SK-N-SH (cell line): ENCODE measurements at regions of chr15 and their contacts with region 1.

Region 1: GRCh38 chr15:86915811-86916331 is 836.2 kb downstream of the AGBL1 start:
- DNase-seq: peak; percentile 65
- H3K4me3 ChIP-seq: no peak overlapping the region
- H3K27ac ChIP-seq: no peak overlapping the region
- H3K4me1 ChIP-seq: no peaks in the 10 kb centered on the region; a peak in 1 of 4 replicates
- H3K27me3 ChIP-seq: no peaks in the 10 kb centered on the region
- CTCF ChIP-seq: peak; percentile 62
- EP300 ChIP-seq: no peak
- RAD21 ChIP-seq: peak; percentile 83

Region 2: DNA sequence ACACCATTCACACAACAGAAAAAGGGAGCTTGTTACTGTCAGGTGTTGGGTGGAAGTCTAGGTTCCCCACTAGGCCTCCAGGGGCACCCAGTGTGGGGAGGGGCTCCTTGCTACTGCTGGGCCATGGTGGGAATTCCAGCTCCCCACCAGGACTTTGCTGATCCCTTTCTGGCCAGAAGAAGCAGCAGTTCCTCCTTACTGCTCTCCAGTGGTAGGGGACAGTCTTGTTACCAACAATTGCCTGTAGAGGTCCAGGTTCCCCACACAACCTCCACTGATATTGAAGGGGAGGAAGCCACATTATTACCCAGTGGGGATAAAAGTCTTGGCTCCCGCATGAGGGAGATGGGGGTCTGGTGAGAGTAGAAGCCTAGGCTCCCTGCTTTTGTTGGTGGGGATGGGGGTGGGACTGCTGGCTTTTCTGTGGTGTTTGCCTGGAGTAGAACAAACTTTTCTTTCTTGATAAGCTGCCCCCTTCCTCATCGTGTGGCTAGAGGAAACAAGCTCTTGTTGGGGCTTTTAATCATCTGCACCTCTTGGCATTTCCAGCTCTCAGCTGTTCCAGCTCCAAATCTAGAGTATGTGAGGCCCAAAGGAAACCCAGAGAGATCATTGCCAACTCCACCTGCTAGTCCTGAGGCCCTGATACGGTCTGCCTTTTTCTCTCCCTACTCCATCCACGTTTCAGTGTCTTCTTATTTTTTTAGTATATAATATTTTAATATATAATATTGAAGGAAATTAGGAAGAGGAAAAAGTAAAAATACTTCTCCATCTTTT is 12.0 kb before region 1 on chr15:
- CTCF ChIA-PET with region 1: interaction called, 12 read pairs
- POLR2A ChIA-PET with region 1: no interaction called
- DNase-seq: no peak
- H3K4me3 ChIP-seq: no peak overlapping the region
- H3K27ac ChIP-seq: no peak overlapping the region
- H3K4me1 ChIP-seq: no peaks in the 10 kb centered on the region
- H3K27me3 ChIP-seq: no peaks in the 10 kb centered on the region
- CTCF ChIP-seq: no peak
- EP300 ChIP-seq: no peak
- RAD21 ChIP-seq: no peak

Region 3: GRCh38 chr15:86973376-86973775 is 57.5 kb after region 1 on chr15:
- CTCF ChIA-PET with region 1: no interaction called
- POLR2A ChIA-PET with region 1: no interaction called
- DNase-seq: no peak
- H3K4me3 ChIP-seq: no peak overlapping the region
- H3K27ac ChIP-seq: no peak overlapping the region
- H3K4me1 ChIP-seq: no peaks in the 10 kb centered on the region
- H3K27me3 ChIP-seq: no peaks in the 10 kb centered on the region
- CTCF ChIP-seq: no peak
- EP300 ChIP-seq: no peak
- RAD21 ChIP-seq: no peak